ENCODE measurements at regions of chr5 and their contacts with region 1.

Region 1: DNA sequence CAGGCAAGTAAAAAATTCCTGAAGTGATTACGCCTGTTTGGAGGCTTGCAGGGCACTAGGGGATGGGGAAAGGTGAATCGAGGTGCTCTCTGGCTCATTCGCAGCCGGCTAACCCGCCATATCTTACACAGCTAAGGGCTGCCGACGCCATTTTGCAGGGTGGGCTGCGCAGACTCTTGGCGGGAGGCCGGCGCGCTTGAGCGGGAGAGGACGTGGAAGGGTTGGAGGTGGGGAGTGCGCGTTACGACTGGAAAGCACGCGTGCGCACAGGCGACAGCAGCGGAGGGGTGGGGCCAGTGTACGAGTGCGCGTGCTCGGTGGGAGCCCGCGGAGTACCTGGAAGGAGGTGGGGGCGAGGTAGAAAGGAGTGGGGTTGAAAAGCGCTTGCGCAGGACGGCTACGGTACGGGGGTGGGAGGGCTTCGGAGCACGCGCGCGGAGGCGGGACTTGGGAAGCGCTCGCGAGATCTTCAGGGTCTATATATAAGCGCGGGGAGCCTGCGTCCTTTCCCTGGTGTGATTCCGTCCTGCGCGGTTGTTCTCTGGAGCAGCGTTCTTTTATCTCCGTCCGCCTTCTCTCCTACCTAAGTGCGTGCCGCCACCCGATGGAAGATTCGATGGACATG is at the start of gene NPM1:
- DNase-seq: peak; percentile 99
- H3K4me3 Mint-ChIP-seq: peak within 1 kb of the TSS; percentile 90
- H3K27ac Mint-ChIP-seq: peak within 1 kb of the TSS; percentile 95
- H3K4me1 Mint-ChIP-seq: peaks cover 38% of the 10 kb centered on the region
- H3K27me3 Mint-ChIP-seq: peaks cover 11% of the 10 kb centered on the region
- CTCF ChIP-seq: no peak
- total RNA-seq, gene NPM1: 1,708 and 1,863 TPM in 2 replicates

Region 2: GRCh38 chr5:170782438-170782837 is 605.0 kb before region 1 on chr5:
- CTCF ChIA-PET with region 1: no interaction called
- intact Hi-C with region 1: loop called (anchors 5 kb)
- DNase-seq: peak; percentile 91
- H3K4me3 Mint-ChIP-seq: peak overlapping the region; percentile 99
- H3K27ac Mint-ChIP-seq: peak overlapping the region; percentile 81
- H3K4me1 Mint-ChIP-seq: peaks cover 65% of the 10 kb centered on the region
- H3K27me3 Mint-ChIP-seq: no peaks in the 10 kb centered on the region
- CTCF ChIP-seq: no peak

Region 3: GRCh38 chr5:171462928-171463862 is 75.7 kb after region 1 on chr5:
- CTCF ChIA-PET with region 1: no interaction called
- intact Hi-C with region 1: no loop called
- DNase-seq: no peak
- H3K4me3 Mint-ChIP-seq: no peak overlapping the region
- H3K27ac Mint-ChIP-seq: no peak overlapping the region
- H3K4me1 Mint-ChIP-seq: no peaks in the 10 kb centered on the region
- H3K27me3 Mint-ChIP-seq: peaks cover 67% of the 10 kb centered on the region
- CTCF ChIP-seq: no peak

Region 4: DNA sequence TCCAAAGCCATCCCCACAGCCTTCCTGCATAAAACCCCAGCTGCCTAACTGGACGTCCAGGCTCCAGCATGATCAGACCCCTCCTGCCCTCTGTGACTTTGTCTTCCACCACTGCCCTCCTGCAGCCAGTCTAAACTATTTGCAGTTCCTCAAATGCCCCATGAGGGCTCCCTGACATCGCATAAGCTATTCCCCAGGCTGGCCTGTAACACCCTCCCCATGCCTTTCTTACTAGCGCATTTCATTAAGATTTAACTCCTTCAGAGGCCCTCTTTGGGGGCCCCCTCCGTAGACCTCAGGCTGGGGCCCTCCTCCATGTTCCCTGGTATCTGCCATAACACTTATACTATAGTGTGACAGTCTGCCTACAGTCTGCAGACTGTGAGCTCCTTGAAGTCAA is 382.7 kb after region 1 on chr5:
- CTCF ChIA-PET with region 1: no interaction called
- intact Hi-C with region 1: no loop called
- DNase-seq: no peak
- H3K4me3 Mint-ChIP-seq: no peak overlapping the region
- H3K27ac Mint-ChIP-seq: no peak overlapping the region
- H3K4me1 Mint-ChIP-seq: no peaks in the 10 kb centered on the region
- H3K27me3 Mint-ChIP-seq: peaks cover 42% of the 10 kb centered on the region
- CTCF ChIP-seq: no peak

Measured in Calu3 (cell line).